Activated T-helper 1 cell treated with anti-CD3 and anti-CD28 coated beads, Interleukin-12 subunit alpha, Interleukin-12 subunit beta, Interleukin-2, Interleukin-4 antibody, amounts not matched to agents 30 ng/mL and 10 ng/mL and 1 ng/mL, durations not matched to agents 14 hours and 24 hours and 36 hours (primary cell): ENCODE measurements at regions of chr13 and their contacts with region 1.

Region 1: DNA sequence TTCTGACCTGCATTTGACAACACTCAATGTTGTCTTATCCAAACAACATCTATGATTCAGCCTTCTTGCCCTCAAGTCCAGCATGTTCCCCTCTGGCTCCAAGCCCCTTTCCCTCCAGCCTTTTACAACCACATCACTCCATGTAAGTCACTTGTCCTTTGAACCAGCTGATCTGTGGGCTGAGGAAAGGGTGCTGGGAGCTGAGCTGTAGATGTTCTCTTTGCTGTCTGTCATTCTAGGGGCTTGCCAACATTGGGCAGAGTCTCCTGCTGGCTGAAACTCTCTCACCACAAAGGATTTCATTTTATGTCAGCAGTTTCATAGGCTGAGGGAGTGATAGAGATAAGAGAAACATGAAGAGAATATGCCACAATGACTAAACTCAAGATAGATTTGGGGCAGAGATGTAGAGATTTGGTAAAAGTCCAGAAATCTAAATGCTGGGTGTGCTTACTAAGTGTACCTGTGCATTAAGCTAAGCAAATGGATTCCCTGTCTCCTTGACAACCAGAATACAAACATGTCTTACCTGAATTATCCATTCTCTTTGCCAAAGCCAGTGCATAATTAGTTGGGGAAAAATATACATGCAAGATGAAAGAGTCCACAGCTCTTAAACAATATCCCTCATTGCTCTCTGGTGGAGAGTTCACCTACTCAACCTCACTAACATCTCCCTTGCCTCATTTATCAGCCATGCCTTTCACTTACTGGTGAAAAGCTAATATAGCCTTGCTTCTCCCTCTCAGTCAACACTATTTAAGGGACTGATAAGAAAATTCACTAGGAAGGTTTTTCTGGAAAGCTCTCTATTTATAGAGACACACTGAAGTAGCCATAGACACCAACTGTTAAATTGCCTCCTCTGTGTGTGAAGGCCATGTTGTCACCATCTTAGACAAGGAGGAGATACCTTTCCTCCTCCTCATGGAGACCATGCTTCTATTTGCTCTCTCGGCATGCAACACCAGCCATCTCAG is 175.5 kb upstream of the SERP2 start:
- DNase-seq: peak; percentile 50
- H3K4me3 Mint-ChIP-seq: no peak overlapping the region
- H3K27ac Mint-ChIP-seq: peak overlapping the region; percentile 37
- H3K4me1 Mint-ChIP-seq: peaks cover 47% of the 10 kb centered on the region
- H3K27me3 Mint-ChIP-seq: peaks cover 32% of the 10 kb centered on the region

Region 2: GRCh38 chr13:44141725-44142539 is 56.1 kb before region 1 on chr13:
- intact Hi-C with region 1: loop called (anchors 1 kb)
- DNase-seq: peak; percentile 94
- H3K4me3 Mint-ChIP-seq: peak overlapping the region; percentile 85
- H3K27ac Mint-ChIP-seq: peak overlapping the region; percentile 82
- H3K4me1 Mint-ChIP-seq: peaks cover 26% of the 10 kb centered on the region
- H3K27me3 Mint-ChIP-seq: peaks cover 41% of the 10 kb centered on the region

Region 3: GRCh38 chr13:44293908-44294735 is 96.0 kb after region 1 on chr13:
- intact Hi-C with region 1: loop called (anchors 1 kb)
- DNase-seq: no peak
- H3K4me3 Mint-ChIP-seq: no peak overlapping the region
- H3K27ac Mint-ChIP-seq: peak overlapping the region; percentile 74
- H3K4me1 Mint-ChIP-seq: peaks cover 28% of the 10 kb centered on the region
- H3K27me3 Mint-ChIP-seq: peaks cover 6% of the 10 kb centered on the region

Region 4: GRCh38 chr13:44435142-44435982 is 237.3 kb after region 1 on chr13:
- intact Hi-C with region 1: loop called (anchors 2 kb)
- DNase-seq: peak; percentile 70
- H3K4me3 Mint-ChIP-seq: peak overlapping the region; percentile 83
- H3K27ac Mint-ChIP-seq: peak overlapping the region; percentile 72
- H3K4me1 Mint-ChIP-seq: peaks cover 17% of the 10 kb centered on the region
- H3K27me3 Mint-ChIP-seq: peaks cover 47% of the 10 kb centered on the region

Region 5: GRCh38 chr13:44768239-44768638 is 570.2 kb after region 1 on chr13:
- intact Hi-C with region 1: loop called (anchors 5 kb)
- DNase-seq: peak; percentile 63
- H3K4me3 Mint-ChIP-seq: peak overlapping the region; percentile 41
- H3K27ac Mint-ChIP-seq: peak overlapping the region; percentile 82
- H3K4me1 Mint-ChIP-seq: peaks cover 56% of the 10 kb centered on the region
- H3K27me3 Mint-ChIP-seq: no peaks in the 10 kb centered on the region